HEK293 (cell line): ENCODE measurements at regions of chr16 and their contacts with region 1.

Region 1: GRCh38 chr16:5234295-5235050 is 136.9 kb upstream of the EEF2KMT start:
- H3K4me3 ChIP-seq: no peak overlapping the region
- H3K27ac ChIP-seq: no peak overlapping the region
- H3K4me1 ChIP-seq: no peaks in the 10 kb centered on the region
- CTCF ChIP-seq: no peak

Region 2: DNA sequence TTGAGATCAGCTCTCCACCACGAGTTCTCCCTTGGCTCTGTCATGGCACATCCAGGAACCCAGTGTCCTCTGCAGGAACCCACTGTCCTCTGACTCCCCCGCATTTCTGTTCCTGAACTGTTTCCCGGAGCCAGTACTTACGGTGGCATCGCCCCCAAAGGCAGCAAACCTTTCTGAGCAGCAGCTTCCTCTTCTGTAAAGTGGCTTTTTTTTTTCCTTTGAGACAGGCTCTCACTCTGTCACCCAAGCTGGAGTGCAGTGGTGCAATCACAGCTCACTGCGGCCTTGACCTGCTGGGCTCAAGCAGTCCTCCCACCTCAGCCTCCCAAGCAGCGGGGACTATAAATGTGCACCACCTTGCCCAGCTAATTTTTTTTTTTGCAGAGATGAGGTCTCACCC is 232.9 kb before region 1 on chr16:
- CTCF ChIA-PET with region 1: no interaction called
- POLR2A ChIA-PET with region 1: interaction called, 11 read pairs
- H3K4me3 ChIP-seq: no peak overlapping the region
- H3K27ac ChIP-seq: no peak overlapping the region
- H3K4me1 ChIP-seq: no peaks in the 10 kb centered on the region
- CTCF ChIP-seq: no peak